ENCODE measurements at regions of chr11 and their contacts with region 1.

Region 1: GRCh38 chr11:12301379-12301778 is 76.0 kb upstream of the PARVA start:
- DNase-seq: no peak
- H3K27ac ChIP-seq: no peak overlapping the region
- CTCF ChIP-seq: no peak

Region 2: GRCh38 chr11:12248338-12248737 is 53.0 kb before region 1 on chr11:
- CTCF ChIA-PET with region 1: no interaction called
- POLR2A ChIA-PET with region 1: no interaction called
- DNase-seq: no peak
- H3K27ac ChIP-seq: peak overlapping the region; percentile 42
- CTCF ChIP-seq: no peak

Region 3: DNA sequence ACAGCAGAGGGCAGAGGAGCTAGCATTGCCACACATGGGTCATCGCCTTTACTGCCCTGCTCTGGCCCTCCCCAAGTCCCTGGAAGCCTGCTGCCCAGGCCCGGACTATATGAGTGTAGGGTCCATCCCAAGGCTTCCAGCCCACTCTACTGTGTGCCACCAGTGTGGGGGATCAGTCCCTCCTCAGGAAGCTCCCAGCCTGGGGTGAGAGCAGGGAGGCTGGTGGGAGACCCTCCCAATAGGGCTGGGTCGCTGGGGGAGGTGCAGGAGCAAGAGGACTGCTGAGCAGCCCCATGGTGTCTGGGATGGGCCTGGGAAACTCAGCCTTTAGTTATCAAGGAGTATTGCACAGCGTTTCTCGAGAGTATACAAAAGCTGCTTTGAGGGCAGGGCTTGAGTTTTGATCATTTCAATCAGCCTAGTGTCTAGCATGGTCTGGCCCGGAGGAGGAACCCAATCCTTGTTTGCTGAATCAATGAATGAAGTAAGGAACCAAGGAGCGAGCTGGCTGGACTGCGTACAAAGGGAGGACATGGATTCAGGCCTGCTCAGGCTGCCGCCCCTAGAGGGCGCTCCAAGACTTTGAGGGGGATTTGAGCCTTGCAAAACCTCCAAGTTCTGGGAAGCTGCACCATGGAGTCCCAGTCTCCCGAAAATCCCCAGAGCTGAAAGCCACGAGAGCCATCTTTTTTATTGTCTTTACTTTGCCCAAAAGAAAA is 13.0 kb before region 1 on chr11:
- CTCF ChIA-PET with region 1: interaction called, 13 read pairs
- POLR2A ChIA-PET with region 1: no interaction called
- DNase-seq: peak; percentile 63
- H3K27ac ChIP-seq: peak overlapping the region; percentile 95
- CTCF ChIP-seq: peak; percentile 72

Measured in RWPE1 (cell line).